ENCODE measurements at regions of chr12 and their contacts with region 1.

Region 1: GRCh38 chr12:69330475-69331473 is 17.4 kb upstream of the LYZ start:
- DNase-seq: peak; percentile 77
- H3K4me3 ChIP-seq: peak overlapping the region; percentile 61
- H3K27ac ChIP-seq: peak overlapping the region; percentile 69
- H3K4me1 ChIP-seq: peaks cover 32% of the 10 kb centered on the region
- CTCF ChIP-seq: no peak

Region 2: DNA sequence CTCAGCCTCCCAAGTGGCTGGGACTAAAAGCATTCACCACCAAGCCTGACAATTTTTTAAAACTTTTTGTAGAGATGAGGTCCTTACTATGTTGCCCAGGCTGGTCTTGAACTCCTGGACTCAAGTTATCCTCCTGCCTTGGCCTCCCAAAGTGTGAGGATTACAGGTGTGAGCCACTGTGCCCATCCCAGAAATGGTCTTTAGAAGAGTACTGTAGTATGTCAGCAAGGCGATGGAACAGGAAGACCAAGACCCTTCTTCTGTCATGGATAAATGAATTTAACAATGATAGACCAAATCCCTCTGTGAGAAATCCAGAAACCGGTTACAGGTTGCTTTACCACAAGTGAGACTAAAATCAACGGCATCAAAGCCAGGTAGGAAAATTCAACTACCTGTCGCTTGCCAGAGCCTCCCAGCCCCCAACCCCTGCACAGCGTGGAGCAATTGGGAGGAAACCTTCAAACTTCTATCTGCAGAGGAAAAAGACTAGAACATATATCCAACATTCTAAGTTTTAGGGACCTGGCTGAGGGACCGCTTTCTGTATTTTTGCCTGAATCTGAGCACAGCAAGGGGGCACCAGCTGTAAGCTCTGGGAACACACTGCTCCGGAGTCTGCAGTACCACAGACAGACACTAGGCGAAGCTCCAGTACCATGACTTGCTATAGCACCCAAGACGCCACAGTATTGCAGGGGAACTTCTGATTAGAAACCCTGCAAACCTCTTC is 40.1 kb before region 1 on chr12:
- CTCF ChIA-PET with region 1: no interaction called
- POLR2A ChIA-PET with region 1: no interaction called
- intact Hi-C with region 1: loop called (anchors 2 kb)
- DNase-seq: peak; percentile 87
- H3K4me3 ChIP-seq: no peak overlapping the region
- H3K27ac ChIP-seq: no peak overlapping the region
- H3K4me1 ChIP-seq: no peaks in the 10 kb centered on the region
- CTCF ChIP-seq: peak; percentile 99

Region 3: DNA sequence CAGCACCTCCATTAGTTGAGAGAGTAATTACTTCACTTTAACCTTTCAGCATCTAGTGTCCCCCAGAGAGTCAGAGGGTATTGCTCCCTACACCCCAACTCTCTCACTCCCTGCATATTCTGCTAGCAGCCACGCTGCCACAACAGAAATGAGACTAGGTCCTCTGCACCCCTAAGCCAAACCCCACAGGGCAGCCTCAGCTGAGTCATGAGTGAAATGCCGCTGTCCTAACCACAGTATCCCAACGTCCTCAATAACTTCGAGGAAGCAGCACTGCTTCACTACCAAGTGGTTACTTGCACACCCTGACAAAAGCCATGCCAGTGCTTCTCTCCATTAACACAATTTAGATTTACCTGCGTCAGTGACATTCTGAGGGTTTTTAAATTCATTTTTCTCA is 10.6 kb after region 1 on chr12:
- CTCF ChIA-PET with region 1: no interaction called
- POLR2A ChIA-PET with region 1: interaction called, 19 read pairs
- intact Hi-C with region 1: no loop called
- DNase-seq: no peak
- H3K4me3 ChIP-seq: no peak overlapping the region
- H3K27ac ChIP-seq: no peak overlapping the region
- H3K4me1 ChIP-seq: peaks cover 16% of the 10 kb centered on the region
- CTCF ChIP-seq: no peak

Region 4: GRCh38 chr12:69368171-69368570 is 37.4 kb after region 1 on chr12:
- CTCF ChIA-PET with region 1: no interaction called
- POLR2A ChIA-PET with region 1: no interaction called
- intact Hi-C with region 1: no loop called
- DNase-seq: no peak
- H3K4me3 ChIP-seq: no peak overlapping the region
- H3K27ac ChIP-seq: no peak overlapping the region
- H3K4me1 ChIP-seq: no peaks in the 10 kb centered on the region
- CTCF ChIP-seq: no peak

Region 5: GRCh38 chr12:69546693-69547438 is 216.1 kb after region 1 on chr12:
- CTCF ChIA-PET with region 1: no interaction called
- POLR2A ChIA-PET with region 1: no interaction called
- intact Hi-C with region 1: no loop called
- DNase-seq: no peak
- H3K4me3 ChIP-seq: no peak overlapping the region
- H3K27ac ChIP-seq: no peak overlapping the region
- H3K4me1 ChIP-seq: no peaks in the 10 kb centered on the region
- CTCF ChIP-seq: no peak

Measured in OCI-LY7 (cell line).